Stomach (tissue), 19 donors: ENCODE measurements at regions of chr6 and their contacts with region 1.

Region 1: DNA sequence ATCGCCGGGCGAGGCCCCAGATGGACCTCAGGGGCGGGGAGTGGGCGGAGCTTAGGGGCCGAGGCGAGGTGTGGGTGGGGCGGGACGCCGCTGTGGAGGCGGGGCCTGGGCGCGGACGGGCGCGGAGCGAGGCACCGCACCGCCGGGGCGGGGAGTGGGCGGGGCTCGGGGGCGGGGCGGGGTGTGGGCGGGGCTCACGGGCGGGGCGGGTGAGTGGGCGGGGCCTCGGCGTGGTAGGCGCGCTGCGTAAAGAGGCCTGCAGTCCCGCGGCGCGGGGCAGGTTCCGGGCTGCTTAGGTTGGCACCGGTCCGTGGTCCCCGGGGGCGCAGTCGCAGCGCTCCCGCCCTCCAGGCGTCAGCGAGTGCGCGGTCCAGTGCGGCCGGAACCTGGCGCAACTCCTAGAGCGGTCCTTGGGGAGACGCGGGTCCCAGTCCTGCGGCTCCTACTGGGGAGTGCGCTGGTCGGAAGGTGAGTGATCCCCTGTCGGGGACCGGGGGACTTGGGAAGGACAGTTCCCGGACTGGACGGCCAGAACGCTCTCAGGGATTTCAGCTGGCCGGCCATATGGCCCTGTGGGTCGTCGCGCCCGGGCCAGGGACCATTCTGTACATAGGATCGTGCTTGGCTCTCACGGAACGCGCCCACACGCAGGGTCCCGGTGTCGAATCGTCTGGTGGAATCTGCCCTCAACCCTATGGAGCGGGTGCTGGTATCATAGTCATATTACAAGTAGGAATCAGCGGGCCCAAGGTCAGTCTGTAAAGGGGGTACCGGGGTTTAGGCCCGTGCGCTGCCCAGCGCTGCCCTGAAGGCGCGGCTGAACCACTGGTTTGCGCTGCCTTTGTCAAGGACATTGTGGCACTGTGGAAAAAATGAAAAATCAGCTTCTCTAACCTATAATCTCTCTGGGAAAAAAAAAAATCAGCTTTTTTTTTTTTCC is at the start of gene NQO2:
- DNase-seq: peak; percentile 97
- H3K4me3 ChIP-seq: peak within 1 kb of the TSS; percentile 68 to 91 (median 85)
- H3K27ac ChIP-seq: peak within 1 kb of the TSS; percentile 84 to 94 (median 90)
- H3K4me1 ChIP-seq: peaks cover 17 to 44% (median 29%) of the 10 kb centered on the region in 4 donors
- H3K27me3 ChIP-seq: no peaks in the 10 kb centered on the region
- CTCF ChIP-seq: no peak
- EP300 ChIP-seq: no peak
- POLR2A ChIP-seq: peak in 1 of 4 donors; percentile 60
- total RNA-seq, gene NQO2: 0.87 to 35.5 (median 5.5) TPM in 4 of 5 donors, not detected in the other

Region 2: DNA sequence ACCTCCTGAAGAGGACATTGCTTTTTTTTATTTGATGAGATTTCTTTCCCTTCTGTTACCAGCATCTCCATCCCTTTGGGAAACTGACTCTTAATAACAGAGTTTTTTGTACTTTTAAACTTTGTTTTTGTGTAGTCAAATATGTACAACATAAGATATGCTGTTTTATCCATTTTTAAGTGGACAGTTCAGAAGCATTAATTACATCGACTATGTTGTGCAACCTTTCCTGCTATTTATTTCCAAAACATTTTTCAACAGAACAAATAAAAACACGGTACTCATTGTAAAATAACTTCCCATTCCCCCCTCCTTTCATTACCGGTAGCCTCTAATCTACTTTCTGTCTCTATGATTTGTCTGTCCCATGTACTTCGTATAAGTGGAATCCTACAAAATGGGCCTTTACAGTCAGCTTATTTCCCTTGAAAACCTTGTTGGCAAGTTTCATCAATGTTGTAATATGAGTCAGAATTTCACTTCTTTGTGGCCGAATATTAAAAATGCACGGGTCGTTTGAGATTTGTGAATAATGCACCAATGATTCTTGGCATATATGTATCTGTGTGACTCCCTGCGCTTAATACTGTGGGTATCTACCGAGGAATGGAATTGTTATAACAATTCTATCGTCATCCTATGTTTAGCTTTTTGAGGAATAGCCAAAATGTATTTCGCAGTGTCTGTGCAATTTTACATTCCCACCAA is 57.3 kb after region 1 on chr6:
- intact Hi-C with region 1: loop called (anchors 5 kb)
- DNase-seq: no peak
- H3K4me3 ChIP-seq: no peak overlapping the region
- H3K27ac ChIP-seq: no peak overlapping the region
- H3K4me1 ChIP-seq: peaks cover 0 to 34% (median 22%) of the 10 kb centered on the region in 4 donors
- H3K27me3 ChIP-seq: no peaks in the 10 kb centered on the region
- CTCF ChIP-seq: no peak
- EP300 ChIP-seq: no peak
- POLR2A ChIP-seq: no peak